ENCODE measurements at regions of chr19 and their contacts with region 1.

Region 1: GRCh38 chr19:8697671-8698432 is 743 bp downstream of the ACTL9 start:
- DNase-seq: peak; percentile 32
- H3K4me3 Mint-ChIP-seq: no peak overlapping the region
- H3K27ac Mint-ChIP-seq: no peak overlapping the region
- H3K4me1 Mint-ChIP-seq: peaks cover 64% of the 10 kb centered on the region
- H3K27me3 Mint-ChIP-seq: peaks cover 6% of the 10 kb centered on the region

Region 2: DNA sequence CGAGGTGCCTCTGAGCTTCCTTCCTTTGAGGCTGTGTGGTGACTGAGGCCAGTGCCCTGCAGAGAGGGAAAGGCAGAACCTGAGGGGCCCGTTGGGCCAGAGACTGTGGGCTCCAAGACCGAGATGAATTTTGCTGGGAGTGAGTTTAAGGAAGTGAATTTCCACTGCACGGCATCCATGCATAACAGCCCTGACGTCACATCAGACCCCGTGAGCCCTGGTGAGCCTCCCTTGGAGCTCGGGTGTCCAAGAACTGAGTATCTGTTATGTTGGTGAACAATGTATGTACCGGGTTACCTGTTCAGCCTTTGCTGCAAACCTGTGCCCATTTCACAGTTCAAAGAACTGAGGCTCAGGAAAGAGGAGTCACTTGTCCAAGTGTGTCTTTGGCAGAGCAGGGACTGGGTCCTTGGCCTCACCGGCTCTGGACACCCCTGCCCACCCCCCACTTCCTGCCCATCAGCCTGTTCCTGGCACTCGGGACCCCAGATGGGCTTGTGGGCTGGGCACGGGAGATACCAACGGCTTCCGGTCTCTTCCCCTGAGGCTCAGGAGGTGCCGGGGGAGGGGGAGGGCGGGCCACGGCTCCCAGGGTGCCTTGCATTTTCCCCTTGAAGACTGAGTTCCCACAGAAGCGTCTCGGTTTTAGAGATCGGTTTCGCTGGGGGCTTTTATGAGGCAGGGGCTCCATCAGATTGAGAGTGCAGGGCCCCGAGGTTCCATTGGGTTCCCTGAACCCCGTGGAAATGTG is 33.8 kb before region 1 on chr19:
- CTCF ChIA-PET with region 1: interaction called, 16 read pairs
- POLR2A ChIA-PET with region 1: interaction called, 4 read pairs
- DNase-seq: peak; percentile 63
- H3K4me3 Mint-ChIP-seq: no peak overlapping the region
- H3K27ac Mint-ChIP-seq: peak overlapping the region; percentile 77
- H3K4me1 Mint-ChIP-seq: peaks cover 69% of the 10 kb centered on the region
- H3K27me3 Mint-ChIP-seq: peaks cover 1% of the 10 kb centered on the region